Activated naive CD4-positive, alpha-beta T cell treated with anti-CD3 and anti-CD28 coated beads for 36 hours (primary cell): ENCODE measurements at regions of chr6 and their contacts with region 1.

Region 1: GRCh38 chr6:37698261-37699137 is 816 bp upstream of the MDGA1 start:
- DNase-seq: peak; percentile 48
- H3K4me3 Mint-ChIP-seq: peak overlapping the region; percentile 98
- H3K27ac Mint-ChIP-seq: peak overlapping the region; percentile 82
- H3K4me1 Mint-ChIP-seq: peaks cover 18% of the 10 kb centered on the region
- H3K27me3 Mint-ChIP-seq: peaks cover 19% of the 10 kb centered on the region

Region 2: DNA sequence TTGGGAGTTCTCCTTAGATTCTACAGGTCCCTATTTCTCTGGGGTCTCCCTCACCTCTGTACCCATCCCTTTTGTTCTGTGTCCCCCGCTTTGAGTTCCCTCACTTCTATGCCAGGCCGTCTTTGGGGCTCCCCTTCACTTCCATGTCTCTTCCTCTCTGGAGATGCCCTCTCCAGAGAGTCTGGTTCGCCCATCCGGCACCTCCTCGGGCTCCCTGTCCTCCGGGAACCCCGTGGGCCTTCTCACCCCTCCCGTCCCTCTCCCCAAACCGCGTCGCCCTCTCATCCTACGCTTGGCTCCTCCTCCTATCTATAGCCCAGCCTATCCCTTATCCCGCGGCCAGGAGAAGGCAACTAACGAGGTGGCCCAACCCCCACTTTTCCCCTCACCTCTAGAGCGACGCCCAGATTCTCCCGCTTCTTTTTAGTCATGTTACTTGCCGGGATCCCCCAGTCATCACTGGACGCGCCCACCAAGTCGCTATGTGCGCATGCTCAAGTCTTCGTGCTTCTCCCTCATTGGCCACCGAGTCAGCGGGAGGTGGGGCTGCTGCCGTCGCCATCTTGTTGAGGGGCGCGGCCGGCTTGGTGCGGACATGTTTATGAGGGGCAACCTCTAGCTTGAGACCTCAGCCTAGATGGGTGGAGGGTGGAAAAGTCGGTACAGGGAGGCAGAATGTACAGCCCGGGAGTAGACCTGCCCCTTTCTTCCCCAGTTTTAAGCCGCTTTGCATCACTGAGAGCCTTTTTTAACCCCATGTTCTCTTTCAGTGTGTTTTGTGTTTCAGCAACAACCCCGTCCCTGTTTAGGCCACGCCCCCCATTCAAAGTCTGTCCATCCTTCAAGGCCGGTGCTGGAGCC is 198.8 kb before region 1 on chr6 and contains the start of gene CCDC167:
- CTCF ChIA-PET with region 1: no interaction called
- intact Hi-C with region 1: loop called (anchors 5 kb)
- DNase-seq: peak; percentile 99
- H3K4me3 Mint-ChIP-seq: peak within 1 kb of the TSS; percentile 98
- H3K27ac Mint-ChIP-seq: peak within 1 kb of the TSS; percentile 97
- H3K4me1 Mint-ChIP-seq: peaks cover 90% of the 10 kb centered on the region
- H3K27me3 Mint-ChIP-seq: no peaks in the 10 kb centered on the region
- total RNA-seq, gene CCDC167: 53.4 to 57.1 TPM

Region 3: DNA sequence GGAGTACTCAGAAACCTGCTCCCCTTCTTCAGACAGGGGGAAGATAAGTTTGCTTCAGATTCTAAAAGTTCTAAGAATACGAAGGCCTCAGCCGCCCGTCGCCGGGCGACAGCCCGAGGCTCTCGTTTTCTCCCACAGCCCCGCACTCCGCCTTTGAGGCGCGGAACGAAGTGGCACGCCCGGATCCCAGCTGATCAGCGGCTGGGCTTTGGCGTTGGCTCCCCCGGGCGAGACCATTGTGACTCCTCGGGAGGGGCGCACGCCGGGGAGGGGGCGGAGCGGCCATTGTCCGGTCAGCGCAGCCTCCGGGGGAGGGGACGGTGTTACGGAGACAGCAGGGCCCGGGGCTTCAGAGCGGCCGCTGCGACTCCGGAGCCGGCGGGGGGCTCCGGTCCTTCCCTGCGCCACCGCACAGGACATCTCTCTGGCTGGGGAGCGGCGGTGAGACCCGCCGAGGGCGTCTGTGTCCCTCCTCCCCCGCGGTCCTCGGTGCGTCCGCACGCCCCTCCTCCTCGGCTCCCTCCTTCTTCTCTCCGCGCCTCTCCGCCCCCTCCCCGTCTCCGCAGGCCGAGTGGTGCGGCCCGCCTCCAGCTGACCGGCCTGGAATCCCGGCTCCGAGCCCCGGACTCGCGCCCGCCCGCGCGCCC is 120.8 kb after region 1 on chr6 and contains the start of gene ZFAND3:
- CTCF ChIA-PET with region 1: interaction called, 3 read pairs
- intact Hi-C with region 1: loop called (anchors 1 kb)
- DNase-seq: peak; percentile 95
- H3K4me3 Mint-ChIP-seq: peak within 1 kb of the TSS; percentile 92
- H3K27ac Mint-ChIP-seq: peak within 1 kb of the TSS; percentile 98
- H3K4me1 Mint-ChIP-seq: peaks cover 52% of the 10 kb centered on the region
- H3K27me3 Mint-ChIP-seq: no peaks in the 10 kb centered on the region
- total RNA-seq, gene ZFAND3: 33.6 to 35.3 TPM

Region 4: GRCh38 chr6:38131527-38131965 is 433.0 kb after region 1 on chr6:
- CTCF ChIA-PET with region 1: no interaction called
- intact Hi-C with region 1: loop called (anchors 5 kb)
- DNase-seq: peak; percentile 33
- H3K4me3 Mint-ChIP-seq: no peak overlapping the region
- H3K27ac Mint-ChIP-seq: peak overlapping the region; percentile 55
- H3K4me1 Mint-ChIP-seq: peaks cover 44% of the 10 kb centered on the region
- H3K27me3 Mint-ChIP-seq: no peaks in the 10 kb centered on the region

Region 5: DNA sequence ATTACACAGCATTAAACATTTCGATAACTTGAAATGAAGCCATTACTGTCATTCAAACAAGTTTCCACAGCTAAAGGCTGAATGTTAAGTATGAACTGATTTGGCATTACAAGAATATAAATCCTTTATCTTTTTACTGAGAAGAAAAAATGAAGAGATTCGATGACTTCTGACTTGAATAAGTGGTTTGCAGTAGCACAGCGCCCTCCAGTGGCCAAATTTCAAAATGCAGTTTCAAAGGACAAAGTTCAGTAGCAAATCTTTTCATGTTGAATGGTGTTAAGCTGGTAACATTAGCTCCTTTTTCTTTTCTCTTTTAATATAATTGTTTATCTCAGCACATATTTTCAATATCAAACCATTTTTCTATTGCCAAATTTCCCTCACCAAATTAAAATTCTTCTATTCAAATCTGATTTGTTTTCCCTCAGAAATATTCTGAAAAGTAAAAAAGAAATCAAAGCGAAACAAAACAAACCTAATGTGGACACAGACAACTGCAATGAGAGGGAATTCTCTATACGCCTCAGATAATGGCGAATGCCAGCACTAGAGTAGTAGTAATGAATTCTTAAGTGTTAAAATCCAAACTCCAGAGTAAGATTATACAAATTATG is 795.5 kb after region 1 on chr6:
- CTCF ChIA-PET with region 1: interaction called, 6 read pairs
- intact Hi-C with region 1: loop called (anchors 2 kb)
- DNase-seq: peak; percentile 95
- H3K4me3 Mint-ChIP-seq: no peak overlapping the region
- H3K27ac Mint-ChIP-seq: no peak overlapping the region
- H3K4me1 Mint-ChIP-seq: peaks cover 10% of the 10 kb centered on the region
- H3K27me3 Mint-ChIP-seq: no peaks in the 10 kb centered on the region